ENCODE measurements at regions of chr20 and their contacts with region 1.

Region 1: DNA sequence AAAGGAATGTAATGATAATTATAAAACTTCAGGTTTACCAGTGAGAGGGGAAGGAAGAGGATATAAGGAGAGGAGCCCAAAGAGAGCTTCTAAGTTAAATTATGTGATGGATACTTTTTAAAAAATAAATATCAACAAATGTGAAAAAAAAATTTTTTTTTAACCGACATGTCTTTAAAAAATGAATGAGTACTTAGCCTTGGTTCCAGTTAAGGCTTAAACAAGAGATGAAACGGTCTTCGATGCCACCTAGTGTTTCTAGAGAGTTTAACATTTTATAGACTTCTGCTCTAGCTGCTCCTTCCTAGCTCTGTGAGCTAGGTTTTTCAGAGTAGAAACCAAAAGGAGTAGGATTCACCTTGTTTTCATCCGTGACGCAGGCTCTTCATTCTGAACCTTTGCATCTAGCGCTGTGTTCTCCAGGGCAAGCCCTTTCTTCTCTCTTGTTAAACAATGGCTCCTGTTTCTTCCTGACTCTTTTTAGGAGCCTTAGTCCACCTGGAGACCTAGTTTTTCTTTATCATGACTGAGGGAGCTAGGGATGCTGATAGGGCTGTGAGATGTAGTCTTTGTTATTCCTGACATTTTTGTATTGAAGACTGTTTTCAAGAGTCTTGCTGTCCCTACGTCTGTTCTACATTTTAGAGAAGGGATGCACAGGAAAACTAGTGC is 42.4 kb upstream of the GNRH2 start:
- DNase-seq: peak in 1 of 2 experiments; percentile 57
- H3K4me3 ChIP-seq: no peak overlapping the region
- H3K27ac ChIP-seq: no peak overlapping the region
- H3K4me1 ChIP-seq: no peaks in the 10 kb centered on the region
- H3K27me3 ChIP-seq: no peaks in the 10 kb centered on the region
- CTCF ChIP-seq: peak; percentile 78

Region 2: GRCh38 chr20:2688041-2688591 is 312.9 kb before region 1 on chr20:
- CTCF ChIA-PET with region 1: no interaction called
- POLR2A ChIA-PET with region 1: no interaction called
- intact Hi-C with region 1: loop called (anchors 1 kb)
- DNase-seq: peak in 1 of 2 experiments; percentile 43
- H3K4me3 ChIP-seq: no peak overlapping the region
- H3K27ac ChIP-seq: no peak overlapping the region
- H3K4me1 ChIP-seq: no peaks in the 10 kb centered on the region
- H3K27me3 ChIP-seq: peaks cover 57% of the 10 kb centered on the region
- CTCF ChIP-seq: peak; percentile 56

Region 3: DNA sequence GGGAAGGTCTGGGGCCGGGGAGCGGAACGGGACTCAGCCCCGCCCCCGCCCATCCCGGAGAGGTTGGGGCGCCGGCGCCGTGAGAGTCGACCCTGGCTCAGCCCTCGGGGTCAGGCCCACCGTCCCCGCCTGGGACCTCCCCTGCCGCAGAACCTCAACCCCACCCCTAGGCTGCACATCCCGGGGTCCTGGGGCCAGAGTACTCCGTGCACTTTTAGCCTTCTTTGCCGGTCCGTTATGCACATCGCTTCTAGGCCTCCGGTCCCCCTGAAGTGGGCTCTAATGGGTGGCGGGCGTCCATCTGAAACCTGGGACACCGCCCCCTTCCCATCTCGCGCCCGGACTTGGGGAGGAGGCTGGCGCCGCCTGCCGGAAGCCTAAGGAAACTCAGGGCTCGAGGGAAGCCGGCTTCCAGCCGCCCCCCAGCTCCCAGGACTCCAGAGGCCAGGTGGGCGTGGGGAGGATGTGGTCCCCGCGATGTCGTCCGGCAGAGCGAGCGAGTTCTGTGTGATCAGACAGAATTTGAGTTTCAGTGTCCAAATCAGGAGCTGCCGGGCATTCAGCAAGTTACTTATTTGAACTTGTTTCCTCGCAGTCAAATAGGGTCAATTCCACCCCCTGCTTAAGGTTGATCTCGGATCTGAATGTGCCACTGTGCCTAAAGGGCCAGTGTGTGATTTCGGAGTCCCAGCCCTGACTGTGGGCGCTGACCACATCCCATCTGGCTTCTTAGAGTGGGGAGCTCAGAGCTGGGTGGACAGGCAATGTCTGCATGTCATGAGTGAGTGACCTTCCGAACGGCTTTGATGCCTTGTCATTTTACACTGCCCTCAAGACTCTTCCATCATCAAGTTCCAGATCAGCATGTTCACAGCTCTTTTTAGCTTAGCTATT is 248.2 kb before region 1 on chr20:
- CTCF ChIA-PET with region 1: interaction called, 8 read pairs
- POLR2A ChIA-PET with region 1: no interaction called
- intact Hi-C with region 1: loop called (anchors 1 kb)
- DNase-seq: peak in 1 of 2 experiments; percentile 42
- H3K4me3 ChIP-seq: peak overlapping the region; percentile 51; the same call in 1 of the 2 replicates
- H3K27ac ChIP-seq: no peak overlapping the region
- H3K4me1 ChIP-seq: peaks cover 7% of the 10 kb centered on the region
- H3K27me3 ChIP-seq: peaks cover 43% of the 10 kb centered on the region
- CTCF ChIP-seq: peak; percentile 82

Region 4: DNA sequence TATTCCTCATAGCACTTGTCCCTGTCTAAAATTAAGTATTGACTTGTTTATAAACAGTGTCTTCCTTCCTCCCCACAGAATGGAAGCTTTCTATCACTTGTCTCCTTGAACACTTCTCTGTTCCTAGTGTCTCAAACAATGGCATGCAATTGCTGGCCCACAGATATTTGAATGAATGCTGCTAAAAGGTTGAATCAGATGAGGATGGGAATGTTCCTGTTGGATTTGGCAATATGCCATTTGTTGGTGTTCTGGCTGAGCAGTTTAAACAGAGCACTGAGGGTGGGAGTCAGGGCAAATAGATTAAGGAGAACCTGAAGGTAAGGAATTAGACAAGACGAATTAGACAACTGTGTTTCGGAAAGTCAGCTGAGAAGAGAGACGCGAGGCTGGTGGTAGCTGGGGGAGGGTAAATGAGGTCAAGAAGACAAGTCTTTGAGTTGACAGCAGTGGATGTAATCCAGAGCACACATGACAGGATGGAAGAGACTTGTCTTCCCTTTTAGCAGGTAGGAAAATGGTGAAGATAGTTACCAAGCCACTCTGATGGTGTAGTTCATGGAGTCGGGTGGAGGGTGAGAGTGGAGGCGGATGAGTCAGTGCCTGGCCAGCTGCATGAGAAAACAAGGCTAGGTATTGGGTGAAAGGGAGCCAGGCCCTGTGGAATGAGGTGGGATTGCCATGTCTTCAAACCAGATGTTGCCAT is 15.9 kb before region 1 on chr20:
- CTCF ChIA-PET with region 1: no interaction called
- POLR2A ChIA-PET with region 1: no interaction called
- intact Hi-C with region 1: no loop called
- DNase-seq: no peak
- H3K4me3 ChIP-seq: no peak overlapping the region
- H3K27ac ChIP-seq: no peak overlapping the region
- H3K4me1 ChIP-seq: no peaks in the 10 kb centered on the region; the same call in 1 of the 2 replicates
- H3K27me3 ChIP-seq: no peaks in the 10 kb centered on the region
- CTCF ChIP-seq: no peak

Region 5: GRCh38 chr20:3146732-3147341 is 145.8 kb after region 1 on chr20:
- CTCF ChIA-PET with region 1: no interaction called
- POLR2A ChIA-PET with region 1: no interaction called
- intact Hi-C with region 1: no loop called
- DNase-seq: no peak
- H3K4me3 ChIP-seq: no peak overlapping the region
- H3K27ac ChIP-seq: no peak overlapping the region
- H3K4me1 ChIP-seq: no peaks in the 10 kb centered on the region
- H3K27me3 ChIP-seq: no peaks in the 10 kb centered on the region
- CTCF ChIP-seq: no peak

Measured in PC-9 (cell line).